ENCODE measurements at regions of chr2 and their contacts with region 1.

Region 1: DNA sequence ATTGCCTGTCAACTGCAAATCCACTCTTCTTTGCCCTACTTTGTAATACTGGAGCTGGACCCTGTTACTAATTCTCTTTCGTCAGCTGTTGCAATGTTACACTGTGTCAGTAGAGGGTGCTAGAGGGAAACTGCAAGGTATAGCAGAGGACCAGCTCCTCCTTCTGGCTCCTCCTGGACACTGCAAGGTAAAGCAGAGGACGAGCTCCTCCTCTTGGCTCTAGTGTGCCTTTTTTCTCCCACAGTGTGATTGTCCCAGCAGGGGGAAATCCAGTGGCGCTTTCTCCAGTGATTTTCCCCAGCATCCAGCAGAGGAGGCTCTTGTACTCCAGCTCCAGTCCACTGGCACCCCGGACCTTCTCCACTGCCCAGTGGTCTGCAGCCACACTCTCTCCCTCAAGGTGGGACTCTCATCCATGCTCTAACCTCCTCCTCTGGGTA is 95.6 kb downstream of the CAPN13 start:
- DNase-seq: peak; percentile 63 to 92 (median 83)
- ATAC-seq: peak; percentile 95
- H3K4me3 ChIP-seq: no peak overlapping the region
- H3K4me3 Mint-ChIP-seq: no peak overlapping the region
- H3K27ac ChIP-seq: no peak overlapping the region
- H3K27ac Mint-ChIP-seq: no peak overlapping the region
- H3K4me1 ChIP-seq: no peaks in the 10 kb centered on the region
- H3K4me1 Mint-ChIP-seq: peaks cover 4% of the 10 kb centered on the region
- H3K27me3 ChIP-seq: no peaks in the 10 kb centered on the region
- H3K27me3 Mint-ChIP-seq: peaks cover 3% of the 10 kb centered on the region
- CTCF ChIP-seq: peak; percentile 100

Region 2: GRCh38 chr2:30089171-30089570 is 622.5 kb before region 1 on chr2:
- CTCF ChIA-PET with region 1: interaction called, 41 read pairs
- POLR2A ChIA-PET with region 1: no interaction called
- intact Hi-C with region 1: loop called (anchors 1 kb)
- DNase-seq: no peak
- ATAC-seq: no peak
- H3K4me3 ChIP-seq: no peak overlapping the region
- H3K4me3 Mint-ChIP-seq: no peak overlapping the region
- H3K27ac ChIP-seq: no peak overlapping the region
- H3K27ac Mint-ChIP-seq: no peak overlapping the region
- H3K4me1 ChIP-seq: no peaks in the 10 kb centered on the region
- H3K4me1 Mint-ChIP-seq: no peaks in the 10 kb centered on the region
- H3K27me3 ChIP-seq: peaks cover 3 to 18% of the 10 kb centered on the region in 2 experiments
- H3K27me3 Mint-ChIP-seq: peaks cover 42% of the 10 kb centered on the region
- CTCF ChIP-seq: no peak

Region 3: DNA sequence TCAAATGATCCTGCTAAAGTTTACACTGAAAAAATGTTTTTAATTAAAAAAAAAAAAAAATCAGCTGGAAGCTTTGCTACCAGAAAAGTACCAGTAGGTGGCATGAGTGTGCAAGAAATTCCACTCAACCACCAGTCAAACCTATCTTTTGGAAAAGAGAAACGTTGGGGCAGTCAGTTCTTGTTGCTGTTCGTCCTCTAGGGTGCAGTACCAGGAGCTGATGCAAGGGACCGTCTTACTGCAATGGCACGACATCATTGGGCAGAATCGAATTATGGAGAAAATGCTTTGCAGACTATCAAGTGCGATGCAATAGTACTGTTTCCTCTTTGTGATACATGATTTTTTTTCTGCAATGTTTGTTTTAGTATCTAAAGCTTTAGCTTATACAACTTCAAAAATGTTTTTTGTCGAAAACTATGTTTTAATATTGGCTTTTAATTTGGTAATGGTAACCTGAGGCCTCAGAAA is 546.6 kb before region 1 on chr2:
- CTCF ChIA-PET with region 1: interaction called, 542 read pairs
- POLR2A ChIA-PET with region 1: interaction called, 23 read pairs
- intact Hi-C with region 1: loop called (anchors 1 kb)
- DNase-seq: peak in 8 of 9 experiments; percentile 28 to 90 (median 60)
- ATAC-seq: peak; percentile 83
- H3K4me3 ChIP-seq: no peak overlapping the region
- H3K4me3 Mint-ChIP-seq: no peak overlapping the region
- H3K27ac ChIP-seq: no peak overlapping the region
- H3K27ac Mint-ChIP-seq: no peak overlapping the region
- H3K4me1 ChIP-seq: no peaks in the 10 kb centered on the region
- H3K4me1 Mint-ChIP-seq: peaks cover 5% of the 10 kb centered on the region
- H3K27me3 ChIP-seq: no peaks in the 10 kb centered on the region
- H3K27me3 Mint-ChIP-seq: no peaks in the 10 kb centered on the region
- CTCF ChIP-seq: peak; percentile 93

Region 4: GRCh38 chr2:30239308-30239985 is 472.2 kb before region 1 on chr2:
- CTCF ChIA-PET with region 1: interaction called, 34 read pairs
- POLR2A ChIA-PET with region 1: interaction called, 3 read pairs
- intact Hi-C with region 1: no loop called
- DNase-seq: peak; percentile 48 to 91 (median 79)
- ATAC-seq: peak; percentile 73
- H3K4me3 ChIP-seq: peak overlapping the region; percentile 11 to 39
- H3K4me3 Mint-ChIP-seq: peak overlapping the region; percentile 94
- H3K27ac ChIP-seq: peak overlapping the region; percentile 24 to 60
- H3K27ac Mint-ChIP-seq: peak overlapping the region; percentile 96
- H3K4me1 ChIP-seq: peaks cover 90% of the 10 kb centered on the region
- H3K4me1 Mint-ChIP-seq: peaks cover 88% of the 10 kb centered on the region
- H3K27me3 ChIP-seq: no peaks in the 10 kb centered on the region
- H3K27me3 Mint-ChIP-seq: no peaks in the 10 kb centered on the region
- CTCF ChIP-seq: peak; percentile 95

Region 5: DNA sequence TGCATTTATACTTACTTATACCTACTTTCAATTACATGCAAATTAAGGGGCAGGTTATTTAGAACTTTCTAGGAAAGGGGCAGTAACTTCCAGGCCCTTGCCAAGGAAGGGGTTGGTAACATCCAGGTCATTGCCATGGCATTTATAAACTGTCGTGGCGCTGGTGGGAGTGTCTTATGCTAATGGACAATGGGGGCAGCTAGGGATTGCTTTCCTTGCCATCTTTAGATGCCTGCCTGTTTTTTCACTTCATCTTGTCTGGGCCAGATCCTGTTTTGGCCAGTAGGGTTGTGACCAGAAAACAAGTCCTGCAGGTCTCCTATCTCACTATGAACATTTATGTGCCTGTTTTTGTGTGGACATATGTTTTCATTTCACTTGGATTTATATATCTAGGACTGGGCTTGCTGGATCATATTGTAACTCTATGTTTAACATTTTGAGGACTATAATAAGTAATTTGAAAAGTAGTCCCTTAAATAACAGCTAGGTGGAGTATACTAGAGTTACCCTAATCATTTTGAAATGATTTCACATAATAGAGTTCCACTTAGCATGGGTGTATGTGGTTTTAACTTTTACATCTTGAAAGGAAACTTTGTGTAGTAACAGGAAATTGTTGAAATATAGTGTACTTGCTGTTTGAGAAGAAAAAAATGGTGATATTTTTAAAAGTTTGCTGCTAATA is 208.5 kb before region 1 on chr2:
- CTCF ChIA-PET with region 1: interaction called, 4 read pairs
- POLR2A ChIA-PET with region 1: no interaction called
- intact Hi-C with region 1: loop called in 1 of 2 experiments (anchors 10 kb)
- DNase-seq: peak in 2 of 9 experiments; percentile 10 to 48
- ATAC-seq: peak; percentile 88
- H3K4me3 ChIP-seq: no peak overlapping the region
- H3K4me3 Mint-ChIP-seq: peak overlapping the region; percentile 40
- H3K27ac ChIP-seq: peak overlapping the region in 1 of 2 experiments; percentile 63
- H3K27ac Mint-ChIP-seq: peak overlapping the region; percentile 81
- H3K4me1 ChIP-seq: peaks cover 38% of the 10 kb centered on the region
- H3K4me1 Mint-ChIP-seq: peaks cover 41% of the 10 kb centered on the region
- H3K27me3 ChIP-seq: no peaks in the 10 kb centered on the region
- H3K27me3 Mint-ChIP-seq: no peaks in the 10 kb centered on the region
- CTCF ChIP-seq: no peak

Region 6: GRCh38 chr2:30862054-30862651 is 150.5 kb after region 1 on chr2:
- CTCF ChIA-PET with region 1: interaction called, 72 read pairs
- POLR2A ChIA-PET with region 1: no interaction called
- intact Hi-C with region 1: loop called in 1 of 2 experiments (anchors 2 kb)
- DNase-seq: peak in 5 of 9 experiments; percentile 25 to 66 (median 43)
- ATAC-seq: peak; percentile 40
- H3K4me3 ChIP-seq: no peak overlapping the region
- H3K4me3 Mint-ChIP-seq: no peak overlapping the region
- H3K27ac ChIP-seq: no peak overlapping the region
- H3K27ac Mint-ChIP-seq: no peak overlapping the region
- H3K4me1 ChIP-seq: no peaks in the 10 kb centered on the region
- H3K4me1 Mint-ChIP-seq: peaks cover 2% of the 10 kb centered on the region
- H3K27me3 ChIP-seq: no peaks in the 10 kb centered on the region
- H3K27me3 Mint-ChIP-seq: peaks cover 6% of the 10 kb centered on the region
- CTCF ChIP-seq: peak; percentile 60

Region 7: GRCh38 chr2:31333527-31334183 is 622.0 kb after region 1 on chr2:
- CTCF ChIA-PET with region 1: interaction called, 152 read pairs
- POLR2A ChIA-PET with region 1: interaction called, 3 read pairs
- intact Hi-C with region 1: loop called in 1 of 2 experiments (anchors 1 kb)
- DNase-seq: peak; percentile 56 to 85 (median 72)
- ATAC-seq: peak; percentile 75
- H3K4me3 ChIP-seq: no peak overlapping the region
- H3K4me3 Mint-ChIP-seq: no peak overlapping the region
- H3K27ac ChIP-seq: no peak overlapping the region
- H3K27ac Mint-ChIP-seq: no peak overlapping the region
- H3K4me1 ChIP-seq: no peaks in the 10 kb centered on the region
- H3K4me1 Mint-ChIP-seq: no peaks in the 10 kb centered on the region
- H3K27me3 ChIP-seq: peaks cover 0 to 2% of the 10 kb centered on the region in 2 experiments
- H3K27me3 Mint-ChIP-seq: peaks cover 4% of the 10 kb centered on the region
- CTCF ChIP-seq: peak; percentile 98